ENCODE measurements at regions of chr1 and their contacts with region 1.

Region 1: GRCh38 chr1:63316984-63317816 is 5.2 kb upstream of the FOXD3 start:
- DNase-seq: peak; percentile 69 to 77 (median 73)
- H3K4me3 ChIP-seq: peak overlapping the region; percentile 23 to 77 (median 30)
- H3K4me3 Mint-ChIP-seq: peak overlapping the region; percentile 76 to 95
- H3K27ac ChIP-seq: no peak overlapping the region
- H3K27ac Mint-ChIP-seq: no peak overlapping the region
- H3K4me1 ChIP-seq: peaks cover 50 to 52% of the 10 kb centered on the region in 2 donors
- H3K4me1 Mint-ChIP-seq: peaks cover 55% of the 10 kb centered on the region
- H3K27me3 ChIP-seq: peaks cover 85 to 97% of the 10 kb centered on the region in 2 donors
- H3K27me3 Mint-ChIP-seq: peaks cover 83 to 96% (median 91%) of the 10 kb centered on the region in 3 donors
- CTCF ChIP-seq: peak; percentile 75

Region 2: DNA sequence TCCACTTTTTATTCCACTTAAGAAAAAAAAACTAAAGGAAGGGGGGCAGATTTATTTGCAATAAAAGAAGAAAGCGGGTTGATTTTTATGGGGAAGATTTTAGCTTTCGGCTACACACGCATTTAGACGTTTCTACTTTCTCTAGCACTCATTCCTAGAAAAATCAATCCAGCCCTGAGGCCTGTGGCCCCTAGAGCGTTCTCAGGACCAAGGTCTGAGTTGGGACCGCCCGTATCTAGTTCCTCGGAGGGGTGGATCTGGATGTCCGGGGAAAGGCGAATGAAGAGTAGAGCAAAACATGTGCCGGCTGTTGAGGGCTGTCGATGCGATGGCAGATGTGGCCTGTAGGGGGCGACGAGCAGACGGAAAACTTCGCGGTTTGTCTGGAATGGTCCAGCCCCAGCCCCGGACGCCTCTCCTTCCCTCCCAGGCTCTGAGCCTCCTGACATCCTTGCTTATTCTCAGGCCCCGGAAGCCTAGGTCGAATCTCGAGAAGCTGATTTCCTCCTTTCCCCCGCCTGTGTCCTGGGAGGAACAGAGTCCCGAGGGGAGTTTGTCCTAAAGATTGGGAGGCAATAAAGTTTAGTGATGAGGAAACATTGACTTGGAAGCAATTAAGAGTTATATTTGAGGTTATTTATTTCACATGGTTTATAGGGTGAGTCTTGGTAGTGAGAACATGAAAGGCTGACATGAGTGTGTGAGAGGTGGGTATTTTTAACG is 10.4 kb after region 1 on chr1:
- intact Hi-C with region 1: loop called in 1 of 2 experiments (anchors 2 kb)
- DNase-seq: peak; percentile 57 to 67 (median 62)
- H3K4me3 ChIP-seq: no peak overlapping the region
- H3K4me3 Mint-ChIP-seq: peak overlapping the region in 1 of 2 donors; percentile 92
- H3K27ac ChIP-seq: no peak overlapping the region
- H3K27ac Mint-ChIP-seq: no peak overlapping the region
- H3K4me1 ChIP-seq: peaks cover 26 to 41% of the 10 kb centered on the region in 2 donors
- H3K4me1 Mint-ChIP-seq: peaks cover 45% of the 10 kb centered on the region
- H3K27me3 ChIP-seq: peaks cover 88 to 93% of the 10 kb centered on the region in 2 donors
- H3K27me3 Mint-ChIP-seq: peaks cover 89 to 95% (median 91%) of the 10 kb centered on the region in 3 donors
- CTCF ChIP-seq: peak; percentile 91

Region 3: GRCh38 chr1:63367215-63368103 is 50.3 kb after region 1 on chr1 and contains the start of gene ALG6:
- intact Hi-C with region 1: loop called in 1 of 2 experiments (anchors 5 kb)
- DNase-seq: peak; percentile 89 to 91 (median 90)
- H3K4me3 ChIP-seq: peak within 1 kb of the TSS; percentile 67 to 95 (median 90)
- H3K4me3 Mint-ChIP-seq: peak within 1 kb of the TSS; percentile 97 to 98
- H3K27ac ChIP-seq: peak within 1 kb of the TSS; percentile 44 to 82
- H3K27ac Mint-ChIP-seq: peak within 1 kb of the TSS; percentile 68 to 93 (median 84)
- H3K4me1 ChIP-seq: peaks cover 15 to 18% of the 10 kb centered on the region in 2 donors
- H3K4me1 Mint-ChIP-seq: peaks cover 17% of the 10 kb centered on the region
- H3K27me3 ChIP-seq: no peaks in the 10 kb centered on the region
- H3K27me3 Mint-ChIP-seq: peaks cover 3 to 17% (median 7%) of the 10 kb centered on the region in 3 donors
- CTCF ChIP-seq: no peak
- polyA plus RNA-seq, gene ALG6: 9.3 to 24.7 (median 20.2) TPM

Region 4: GRCh38 chr1:63537940-63538339 is 220.7 kb after region 1 on chr1:
- intact Hi-C with region 1: loop called (anchors 5 to 10 kb)
- DNase-seq: peak in 2 of 3 donors; percentile 8 to 23
- H3K4me3 ChIP-seq: no peak overlapping the region
- H3K4me3 Mint-ChIP-seq: no peak overlapping the region
- H3K27ac ChIP-seq: no peak overlapping the region
- H3K27ac Mint-ChIP-seq: no peak overlapping the region
- H3K4me1 ChIP-seq: no peaks in the 10 kb centered on the region
- H3K4me1 Mint-ChIP-seq: no peaks in the 10 kb centered on the region
- H3K27me3 ChIP-seq: no peaks in the 10 kb centered on the region
- H3K27me3 Mint-ChIP-seq: no peaks in the 10 kb centered on the region
- CTCF ChIP-seq: peak; percentile 59